ENCODE measurements at regions of chr20 and their contacts with region 1.

Region 1: GRCh38 chr20:57622579-57623377 is 2.6 kb upstream of the ZBP1 start:
- DNase-seq: peak; percentile 50 to 84 (median 62)
- ATAC-seq: peak; percentile 9 to 15
- H3K4me3 Mint-ChIP-seq: peak overlapping the region in 8 of 10 donors; percentile 14 to 89 (median 56)
- H3K27ac Mint-ChIP-seq: peak overlapping the region; percentile 60 to 90 (median 79)
- H3K4me1 Mint-ChIP-seq: peaks cover 34 to 93% (median 82%) of the 10 kb centered on the region in 4 donors
- H3K27me3 Mint-ChIP-seq: no peaks in the 10 kb centered on the region

Region 2: GRCh38 chr20:57633945-57634491 is 11.2 kb after region 1 on chr20:
- POLR2A ChIA-PET with region 1: interaction called, 239 read pairs
- DNase-seq: peak in 6 of 10 donors; percentile 21 to 78 (median 46)
- ATAC-seq: peak; percentile 69 to 75
- H3K4me3 Mint-ChIP-seq: peak overlapping the region in 8 of 10 donors; percentile 24 to 76 (median 61)
- H3K27ac Mint-ChIP-seq: peak overlapping the region in 9 of 10 donors; percentile 14 to 89 (median 71)
- H3K4me1 Mint-ChIP-seq: peaks cover 26 to 60% (median 50%) of the 10 kb centered on the region in 4 donors
- H3K27me3 Mint-ChIP-seq: peaks cover 0 to 16% (median 0%) of the 10 kb centered on the region in 5 donors

Region 3: DNA sequence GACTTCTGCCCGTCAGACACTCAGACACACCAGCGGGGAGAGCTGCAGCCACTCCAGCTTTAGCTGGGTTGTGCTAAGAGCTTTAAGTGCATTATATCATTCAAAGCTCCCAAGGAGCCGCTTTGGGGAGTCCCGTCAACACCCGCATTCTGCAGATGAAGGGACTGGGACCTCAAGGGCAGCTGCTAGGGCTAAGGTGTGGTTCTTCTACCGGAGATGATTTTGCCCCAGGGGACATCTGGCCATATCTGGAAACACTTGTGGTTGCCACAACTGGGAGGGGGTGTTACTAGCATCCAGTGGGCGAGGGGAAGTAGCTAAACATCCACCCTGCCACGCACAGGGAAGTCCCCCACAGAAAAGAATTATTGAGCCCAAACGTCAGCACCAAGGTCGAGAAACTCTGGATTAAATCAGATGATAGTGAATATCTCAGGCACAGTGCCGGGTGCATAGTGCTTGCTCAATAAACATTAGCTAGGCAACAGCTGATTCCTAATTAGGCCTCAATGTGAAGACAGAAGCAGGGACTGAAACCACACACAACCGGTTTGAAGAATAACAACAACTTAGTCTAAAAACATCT is 57.4 kb after region 1 on chr20:
- POLR2A ChIA-PET with region 1: interaction called, 22 read pairs
- DNase-seq: peak in 1 of 10 donors; percentile 28
- ATAC-seq: peak; percentile 17 to 20
- H3K4me3 Mint-ChIP-seq: peak overlapping the region in 6 of 10 donors; percentile 8 to 57 (median 48)
- H3K27ac Mint-ChIP-seq: peak overlapping the region in 6 of 10 donors; percentile 12 to 85 (median 58)
- H3K4me1 Mint-ChIP-seq: peaks cover 21 to 90% (median 47%) of the 10 kb centered on the region in 4 donors
- H3K27me3 Mint-ChIP-seq: peaks cover 0 to 4% (median 0%) of the 10 kb centered on the region in 5 donors